Heart right ventricle (tissue), 16 donors: ENCODE measurements at regions of chr15 and their contacts with region 1.

Region 1: DNA sequence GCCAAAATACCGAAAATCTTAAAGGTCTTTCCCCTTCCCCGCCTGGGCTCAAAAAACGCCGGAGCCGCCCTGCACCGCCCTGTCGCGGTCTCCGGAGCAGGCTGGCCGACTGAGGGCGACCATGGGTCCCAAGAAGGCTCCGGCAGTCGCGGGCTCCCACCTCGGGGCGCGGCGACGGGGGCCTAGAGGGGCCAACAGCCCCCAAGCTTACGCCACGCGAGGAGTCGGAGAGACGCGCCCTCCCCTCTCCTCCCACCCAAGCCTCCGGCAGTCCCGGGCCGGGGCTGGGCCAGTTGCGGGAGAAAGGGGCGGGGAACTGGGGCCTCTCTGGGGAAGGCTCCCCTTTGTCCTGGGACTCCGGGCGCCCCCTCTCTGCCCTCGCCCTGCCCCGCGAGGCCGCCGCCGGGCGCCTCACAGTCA is 69.2 kb downstream of the GOLGA8B start:
- DNase-seq: peak; percentile 54 to 63
- ATAC-seq: peak; percentile 85 to 92 (median 91)
- H3K4me3 ChIP-seq: peak overlapping the region; percentile 49 to 88 (median 66)
- H3K27ac ChIP-seq: peak overlapping the region; percentile 72 to 96 (median 80)
- H3K4me1 ChIP-seq: peaks cover 0 to 18% (median 14%) of the 10 kb centered on the region in 9 donors
- H3K27me3 ChIP-seq: peaks cover 0 to 48% (median 6%) of the 10 kb centered on the region in 7 donors
- CTCF ChIP-seq: peak in 2 of 9 donors; percentile 7 to 21

Region 2: GRCh38 chr15:33675246-33675645 is 839.0 kb before region 1 on chr15:
- intact Hi-C with region 1: no loop called
- DNase-seq: no peak
- ATAC-seq: no peak
- H3K4me3 ChIP-seq: no peak overlapping the region
- H3K27ac ChIP-seq: no peak overlapping the region
- H3K4me1 ChIP-seq: no peaks in the 10 kb centered on the region
- H3K27me3 ChIP-seq: peaks cover 0 to 46% (median 16%) of the 10 kb centered on the region in 7 donors
- CTCF ChIP-seq: peak in 5 of 9 donors; percentile 29 to 48 (median 34)

Region 3: GRCh38 chr15:34470091-34470490 is 44.2 kb before region 1 on chr15:
- intact Hi-C with region 1: no loop called
- DNase-seq: no peak
- ATAC-seq: no peak
- H3K4me3 ChIP-seq: no peak overlapping the region
- H3K27ac ChIP-seq: no peak overlapping the region
- H3K4me1 ChIP-seq: no peaks in the 10 kb centered on the region
- H3K27me3 ChIP-seq: no peaks in the 10 kb centered on the region
- CTCF ChIP-seq: no peak

Region 4: GRCh38 chr15:34594361-34594760 is 80.1 kb after region 1 on chr15:
- intact Hi-C with region 1: loop called in 4 of 10 experiments (anchors 10 kb)
- DNase-seq: no peak
- ATAC-seq: no peak
- H3K4me3 ChIP-seq: no peak overlapping the region
- H3K27ac ChIP-seq: no peak overlapping the region
- H3K4me1 ChIP-seq: no peaks in the 10 kb centered on the region
- H3K27me3 ChIP-seq: peaks cover 0 to 4% (median 0%) of the 10 kb centered on the region in 7 donors
- CTCF ChIP-seq: no peak